ENCODE measurements at regions of chr10 and their contacts with region 1.

Region 1: GRCh38 chr10:16777473-16778370 is 39.5 kb downstream of the RSU1 start:
- DNase-seq: no peak
- H3K4me3 Mint-ChIP-seq: no peak overlapping the region
- H3K27ac Mint-ChIP-seq: peak overlapping the region; percentile 40
- H3K4me1 Mint-ChIP-seq: peaks cover 30% of the 10 kb centered on the region
- H3K27me3 Mint-ChIP-seq: no peaks in the 10 kb centered on the region

Region 2: GRCh38 chr10:15901889-15902288 is 875.8 kb before region 1 on chr10:
- CTCF ChIA-PET with region 1: interaction called, 6 read pairs
- POLR2A ChIA-PET with region 1: interaction called, 3 read pairs
- intact Hi-C with region 1: loop called (anchors 1 kb)
- DNase-seq: no peak
- H3K4me3 Mint-ChIP-seq: no peak overlapping the region
- H3K27ac Mint-ChIP-seq: no peak overlapping the region
- H3K4me1 Mint-ChIP-seq: no peaks in the 10 kb centered on the region
- H3K27me3 Mint-ChIP-seq: peaks cover 16% of the 10 kb centered on the region

Region 3: DNA sequence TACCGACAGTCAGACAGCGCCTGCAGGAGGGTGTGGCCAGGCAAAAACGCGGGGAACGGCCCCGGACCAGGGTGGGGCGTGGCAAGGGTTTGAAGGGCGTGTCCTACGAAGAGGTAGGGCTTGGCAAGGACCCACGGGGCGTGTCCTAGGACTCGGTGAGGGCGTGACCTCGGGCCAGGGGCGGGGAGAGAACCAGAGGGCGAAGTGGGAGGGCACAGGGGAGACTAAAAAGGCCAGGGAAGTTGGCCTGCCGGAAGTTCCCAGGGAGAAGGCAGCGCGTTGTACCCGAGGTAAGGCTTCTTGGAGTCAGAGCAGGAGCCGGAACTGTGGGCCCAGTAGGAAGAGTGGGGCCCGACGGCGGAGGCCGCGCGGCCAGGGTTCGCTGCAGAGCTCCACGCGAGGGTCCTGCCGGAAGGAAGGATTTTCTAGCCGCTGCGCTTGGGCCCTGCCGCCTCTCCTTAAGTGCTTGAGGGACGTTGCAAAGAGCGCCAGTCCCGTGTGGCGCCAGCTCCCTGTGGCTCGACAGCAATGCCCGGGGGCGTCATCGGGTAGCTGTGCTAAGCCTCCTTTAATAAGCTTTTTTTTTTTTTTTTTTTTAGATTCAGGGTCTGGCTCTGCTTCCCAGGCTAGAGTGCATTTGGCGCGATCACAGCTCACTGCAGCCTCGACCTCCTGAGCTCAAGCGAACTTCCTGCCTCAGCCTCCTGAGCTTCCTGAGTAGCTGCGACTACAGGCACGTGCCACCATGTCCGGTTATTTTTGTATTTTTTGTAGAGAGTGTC is 340.8 kb before region 1 on chr10 and contains the start of gene PTER:
- CTCF ChIA-PET with region 1: no interaction called
- POLR2A ChIA-PET with region 1: no interaction called
- intact Hi-C with region 1: loop called (anchors 2 kb)
- DNase-seq: peak; percentile 99
- H3K4me3 Mint-ChIP-seq: peak within 1 kb of the TSS; percentile 86
- H3K27ac Mint-ChIP-seq: peak within 1 kb of the TSS; percentile 84
- H3K4me1 Mint-ChIP-seq: peaks cover 43% of the 10 kb centered on the region
- H3K27me3 Mint-ChIP-seq: no peaks in the 10 kb centered on the region
- total RNA-seq, gene PTER: 25.1 to 27.2 TPM

Region 4: DNA sequence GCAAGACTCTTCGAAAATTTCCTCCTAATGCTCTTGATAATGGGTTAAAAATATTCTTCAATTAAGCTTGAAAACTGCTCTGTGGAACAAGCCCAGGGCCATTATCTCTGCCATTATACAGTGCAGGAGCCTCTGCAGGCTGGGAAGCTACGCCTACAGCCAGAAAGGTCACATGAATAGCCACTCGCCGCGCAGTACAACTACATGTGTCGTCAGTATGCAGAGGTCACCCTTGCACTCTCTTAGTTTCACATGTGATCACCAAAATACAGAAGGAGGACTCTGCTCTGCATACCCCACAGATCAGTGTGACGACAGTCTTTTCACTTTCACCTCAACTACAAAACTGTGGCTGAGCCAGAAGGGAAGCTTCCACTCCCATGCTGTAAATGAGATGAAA is 114.3 kb before region 1 on chr10:
- CTCF ChIA-PET with region 1: no interaction called
- POLR2A ChIA-PET with region 1: no interaction called
- intact Hi-C with region 1: loop called (anchors 5 kb)
- DNase-seq: no peak
- H3K4me3 Mint-ChIP-seq: no peak overlapping the region
- H3K27ac Mint-ChIP-seq: no peak overlapping the region
- H3K4me1 Mint-ChIP-seq: peaks cover 14% of the 10 kb centered on the region
- H3K27me3 Mint-ChIP-seq: no peaks in the 10 kb centered on the region

Region 5: DNA sequence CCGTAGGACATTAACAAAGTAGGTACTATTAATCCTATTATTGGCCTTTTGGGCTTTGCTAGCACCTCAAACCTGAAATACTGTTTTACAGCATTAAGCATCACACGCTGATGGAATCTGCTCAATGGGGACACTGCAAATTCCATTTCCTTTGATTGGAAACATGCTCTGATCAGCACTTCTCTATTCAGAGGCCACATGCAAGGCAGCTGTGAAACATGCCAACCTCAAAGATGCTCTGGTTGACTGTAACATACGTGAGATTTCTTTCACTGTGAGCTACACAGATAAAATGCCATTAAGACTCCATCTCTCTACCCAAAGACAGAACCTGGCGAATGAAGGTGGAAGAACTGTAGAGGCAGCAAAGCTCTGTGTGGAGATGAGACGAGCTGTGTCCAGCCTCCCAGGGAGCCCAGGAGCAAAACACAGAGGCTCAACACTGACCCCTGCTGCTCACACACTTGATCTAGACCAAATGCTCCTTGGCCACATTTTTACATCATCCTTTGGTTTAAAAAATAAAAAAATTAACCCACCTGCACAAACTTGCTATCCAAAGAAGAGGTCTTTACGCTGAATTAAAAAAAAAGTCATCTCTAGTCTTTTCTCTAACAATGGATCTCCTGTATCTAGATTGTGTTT is 31.5 kb after region 1 on chr10:
- CTCF ChIA-PET with region 1: interaction called, 3 read pairs
- POLR2A ChIA-PET with region 1: no interaction called
- intact Hi-C with region 1: loop called (anchors 2 kb)
- DNase-seq: peak; percentile 79
- H3K4me3 Mint-ChIP-seq: no peak overlapping the region
- H3K27ac Mint-ChIP-seq: no peak overlapping the region
- H3K4me1 Mint-ChIP-seq: peaks cover 13% of the 10 kb centered on the region
- H3K27me3 Mint-ChIP-seq: no peaks in the 10 kb centered on the region

Region 6: DNA sequence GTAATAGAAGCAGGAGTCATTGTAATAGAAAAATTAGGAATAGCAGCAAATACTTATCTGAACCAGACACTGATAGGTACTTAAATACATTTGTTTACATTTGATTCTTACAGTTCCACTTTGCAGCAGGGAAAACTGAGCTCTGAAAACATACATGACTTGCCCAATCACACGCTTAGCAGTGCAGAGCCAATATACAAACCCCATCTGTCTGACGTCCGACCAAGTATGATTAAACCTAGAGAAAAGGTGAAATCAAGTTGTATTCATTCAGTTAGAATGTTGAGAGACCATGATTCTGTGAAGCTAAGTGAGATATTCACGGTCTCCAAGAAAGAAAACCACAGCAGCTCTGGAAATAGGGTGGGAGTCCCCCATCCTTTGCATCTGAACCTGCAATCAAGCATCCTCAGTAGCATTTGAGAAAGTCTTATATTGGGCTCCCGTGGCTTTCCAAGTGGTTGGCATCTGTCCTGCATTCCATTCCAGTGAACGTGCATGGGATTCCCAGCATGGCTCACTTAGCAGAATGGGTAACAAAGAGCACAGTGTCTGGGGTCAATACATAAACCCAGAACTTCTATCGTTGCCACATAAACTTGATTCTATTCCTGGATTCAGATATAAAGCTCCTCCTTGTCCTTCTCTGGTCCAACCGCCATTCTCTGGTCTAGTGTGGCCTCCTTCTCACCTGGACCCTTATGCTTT is 188.2 kb after region 1 on chr10:
- CTCF ChIA-PET with region 1: no interaction called
- POLR2A ChIA-PET with region 1: no interaction called
- intact Hi-C with region 1: no loop called
- DNase-seq: no peak
- H3K4me3 Mint-ChIP-seq: no peak overlapping the region
- H3K27ac Mint-ChIP-seq: no peak overlapping the region
- H3K4me1 Mint-ChIP-seq: peaks cover 17% of the 10 kb centered on the region
- H3K27me3 Mint-ChIP-seq: no peaks in the 10 kb centered on the region

Region 7: DNA sequence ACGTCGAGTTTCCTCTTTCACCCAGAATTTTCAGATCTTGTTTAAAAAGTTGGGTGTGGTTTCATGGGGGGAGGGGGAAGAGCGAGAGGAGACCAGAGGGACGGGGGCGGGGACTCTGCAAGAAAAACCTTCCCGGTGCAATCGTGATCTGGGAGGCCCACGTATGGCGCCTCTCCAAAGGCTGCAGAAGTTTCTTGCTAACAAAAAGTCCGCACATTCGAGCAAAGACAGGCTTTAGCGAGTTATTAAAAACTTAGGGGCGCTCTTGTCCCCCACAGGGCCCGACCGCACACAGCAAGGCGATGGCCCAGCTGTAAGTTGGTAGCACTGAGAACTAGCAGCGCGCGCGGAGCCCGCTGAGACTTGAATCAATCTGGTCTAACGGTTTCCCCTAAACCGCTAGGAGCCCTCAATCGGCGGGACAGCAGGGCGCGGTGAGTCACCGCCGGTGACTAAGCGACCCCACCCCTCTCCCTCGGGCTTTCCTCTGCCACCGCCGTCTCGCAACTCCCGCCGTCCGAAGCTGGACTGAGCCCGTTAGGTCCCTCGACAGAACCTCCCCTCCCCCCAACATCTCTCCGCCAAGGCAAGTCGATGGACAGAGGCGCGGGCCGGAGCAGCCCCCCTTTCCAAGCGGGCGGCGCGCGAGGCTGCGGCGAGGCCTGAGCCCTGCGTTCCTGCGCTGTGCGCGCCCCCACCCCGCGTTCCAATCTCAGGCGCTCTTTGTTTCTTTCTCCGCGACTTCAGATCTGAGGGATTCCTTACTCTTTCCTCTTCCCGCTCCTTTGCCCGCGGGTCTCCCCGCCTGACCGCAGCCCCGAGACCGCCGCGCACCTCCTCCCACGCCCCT is 450.6 kb after region 1 on chr10 and contains the start of gene VIM:
- CTCF ChIA-PET with region 1: no interaction called
- POLR2A ChIA-PET with region 1: no interaction called
- intact Hi-C with region 1: loop called (anchors 5 kb)
- DNase-seq: peak; percentile 93
- H3K4me3 Mint-ChIP-seq: peak within 1 kb of the TSS; percentile 95
- H3K27ac Mint-ChIP-seq: peak within 1 kb of the TSS; percentile 87
- H3K4me1 Mint-ChIP-seq: peaks cover 42% of the 10 kb centered on the region
- H3K27me3 Mint-ChIP-seq: peaks cover 1% of the 10 kb centered on the region
- total RNA-seq, gene VIM: 515 to 525 TPM